Activated CD8-positive, alpha-beta T cell treated with anti-CD3 and anti-CD28 coated beads for 36 hours (primary cell): ENCODE measurements at regions of chr17 and their contacts with region 1.

Region 1: GRCh38 chr17:47789611-47790561 is 31.7 kb downstream of the OSBPL7 start:
- DNase-seq: peak; percentile 70
- ATAC-seq: peak; percentile 97
- H3K4me3 Mint-ChIP-seq: peak overlapping the region; percentile 66
- H3K27ac Mint-ChIP-seq: no peak overlapping the region
- H3K4me1 Mint-ChIP-seq: peaks cover 9% of the 10 kb centered on the region
- H3K27me3 Mint-ChIP-seq: peaks cover 58% of the 10 kb centered on the region
- CTCF ChIP-seq: peak; percentile 78

Region 2: GRCh38 chr17:47675380-47676198 is 114.3 kb before region 1 on chr17:
- CTCF ChIA-PET with region 1: interaction called, 17 read pairs
- POLR2A ChIA-PET with region 1: no interaction called
- intact Hi-C with region 1: no loop called
- DNase-seq: no peak
- ATAC-seq: no peak
- H3K4me3 Mint-ChIP-seq: no peak overlapping the region
- H3K27ac Mint-ChIP-seq: peak overlapping the region; percentile 21
- H3K4me1 Mint-ChIP-seq: peaks cover 32% of the 10 kb centered on the region
- H3K27me3 Mint-ChIP-seq: no peaks in the 10 kb centered on the region
- CTCF ChIP-seq: no peak

Region 3: GRCh38 chr17:47687748-47688147 is 102.1 kb before region 1 on chr17:
- CTCF ChIA-PET with region 1: interaction called, 10 read pairs
- POLR2A ChIA-PET with region 1: no interaction called
- intact Hi-C with region 1: no loop called
- DNase-seq: no peak
- ATAC-seq: no peak
- H3K4me3 Mint-ChIP-seq: no peak overlapping the region
- H3K27ac Mint-ChIP-seq: no peak overlapping the region
- H3K4me1 Mint-ChIP-seq: peaks cover 24% of the 10 kb centered on the region
- H3K27me3 Mint-ChIP-seq: no peaks in the 10 kb centered on the region
- CTCF ChIP-seq: no peak

Region 4: DNA sequence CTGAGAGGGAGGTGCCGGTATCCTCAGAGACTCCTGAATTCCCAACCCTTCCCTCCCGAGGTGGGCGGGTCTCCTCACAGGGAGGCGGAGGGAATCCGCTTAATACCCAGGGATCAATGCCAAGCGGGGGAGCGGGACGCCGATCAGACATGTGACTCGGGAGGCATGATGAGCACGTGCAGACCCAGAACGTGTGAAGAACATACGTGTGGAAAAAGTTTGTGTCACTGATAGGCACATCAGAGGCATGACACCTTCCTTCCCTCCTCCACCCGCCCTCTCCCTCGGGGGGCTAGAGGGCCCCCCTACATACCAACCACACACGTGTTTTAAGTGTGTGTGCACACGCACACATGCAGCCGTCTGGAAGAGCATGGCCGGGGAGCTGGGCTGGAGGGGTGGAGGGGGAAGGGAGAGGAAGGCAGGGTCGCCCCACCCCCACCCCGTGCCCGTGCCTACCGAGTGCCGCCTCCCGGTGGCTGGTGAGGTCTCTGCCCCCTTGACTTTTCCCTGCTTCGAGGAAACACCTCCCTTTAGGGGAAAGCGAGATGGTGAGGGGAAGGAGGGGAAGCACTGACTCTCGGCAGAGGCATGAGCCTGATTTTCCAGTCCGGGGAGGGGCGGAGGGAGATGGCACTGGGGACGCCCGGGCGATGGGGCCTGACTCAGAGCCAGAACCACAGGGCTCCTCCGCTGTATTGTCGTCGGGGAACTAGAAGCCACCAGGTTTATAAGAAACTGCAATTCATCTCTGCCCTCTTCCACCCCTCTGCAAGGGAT is 68.9 kb before region 1 on chr17:
- CTCF ChIA-PET with region 1: no interaction called
- POLR2A ChIA-PET with region 1: no interaction called
- intact Hi-C with region 1: no loop called
- DNase-seq: peak; percentile 100
- ATAC-seq: peak; percentile 67
- H3K4me3 Mint-ChIP-seq: peak overlapping the region; percentile 62
- H3K27ac Mint-ChIP-seq: peak overlapping the region; percentile 94
- H3K4me1 Mint-ChIP-seq: peaks cover 86% of the 10 kb centered on the region
- H3K27me3 Mint-ChIP-seq: no peaks in the 10 kb centered on the region
- CTCF ChIP-seq: peak; percentile 14

Region 5: DNA sequence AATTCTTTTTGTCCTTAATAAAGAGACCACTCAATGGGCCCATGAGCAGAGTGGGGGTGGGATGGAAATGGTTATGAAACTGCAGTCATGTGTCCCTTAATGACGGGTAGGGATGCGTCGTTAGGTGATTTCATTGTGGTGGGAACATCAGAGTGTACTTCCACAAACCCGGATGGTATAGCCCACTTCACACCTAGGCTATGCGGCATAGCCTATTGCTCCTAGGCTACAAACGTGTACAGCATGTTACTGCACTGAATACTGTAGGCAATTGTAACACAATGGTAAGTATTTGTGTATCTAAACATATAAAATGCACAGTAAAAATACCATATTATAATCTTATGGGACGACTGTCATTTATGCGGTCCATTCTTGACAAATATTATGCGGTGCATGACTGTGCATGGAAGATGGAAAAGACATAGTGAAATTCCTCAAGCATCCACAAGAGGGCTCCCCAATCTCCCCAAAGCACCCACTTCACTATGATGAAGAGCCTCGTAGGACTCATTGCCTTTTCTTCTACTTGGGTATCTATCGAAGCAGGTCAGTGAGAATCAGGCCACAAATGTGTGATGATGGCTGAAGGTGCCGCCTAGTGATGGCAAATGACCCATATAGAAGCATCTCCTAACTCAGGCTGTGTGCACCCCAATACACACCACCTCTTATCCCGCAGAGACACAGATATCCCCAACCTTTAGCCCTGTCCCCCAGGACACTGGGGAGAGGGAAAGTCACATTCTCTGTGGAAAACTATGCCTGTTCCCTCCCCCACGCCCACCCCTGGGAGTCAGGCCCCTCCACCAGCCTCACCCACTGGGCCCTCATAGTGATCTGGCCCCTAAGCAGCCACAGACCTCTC is 13.3 kb before region 1 on chr17:
- CTCF ChIA-PET with region 1: interaction called, 11 read pairs
- POLR2A ChIA-PET with region 1: interaction called, 3 read pairs
- intact Hi-C with region 1: no loop called
- DNase-seq: peak; percentile 47
- ATAC-seq: peak; percentile 98
- H3K4me3 Mint-ChIP-seq: no peak overlapping the region
- H3K27ac Mint-ChIP-seq: no peak overlapping the region
- H3K4me1 Mint-ChIP-seq: no peaks in the 10 kb centered on the region
- H3K27me3 Mint-ChIP-seq: peaks cover 39% of the 10 kb centered on the region
- CTCF ChIP-seq: peak; percentile 89